ENCODE measurements at regions of chr22 and their contacts with region 1.

Region 1: GRCh38 chr22:38383417-38383816 is 66.2 kb upstream of the CSNK1E start:
- DNase-seq: no peak
- H3K4me3 ChIP-seq: no peak overlapping the region
- H3K27ac ChIP-seq: no peak overlapping the region
- H3K4me1 ChIP-seq: no peaks in the 10 kb centered on the region
- H3K27me3 ChIP-seq: no peaks in the 10 kb centered on the region
- CTCF ChIP-seq: no peak

Region 2: DNA sequence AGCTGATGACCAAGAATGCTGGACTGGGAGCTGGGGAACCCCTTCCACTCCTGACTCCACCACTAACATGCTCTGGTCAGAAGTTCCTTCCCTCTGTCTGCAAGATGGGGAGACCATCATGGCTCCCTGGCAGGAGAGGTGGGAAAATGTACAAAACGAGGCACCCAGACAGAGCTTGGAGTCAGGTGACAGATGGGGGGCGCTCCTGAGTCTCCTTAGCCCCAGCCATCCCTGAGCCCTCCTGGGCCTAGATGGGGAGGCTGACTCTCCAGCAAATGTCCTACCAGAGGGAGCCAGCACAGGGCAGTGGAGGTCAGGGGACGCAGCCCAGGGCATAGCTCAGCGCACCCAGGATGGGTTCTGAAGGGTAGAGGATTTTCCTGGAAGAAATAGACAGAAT is 51.6 kb after region 1 on chr22:
- CTCF ChIA-PET with region 1: no interaction called
- POLR2A ChIA-PET with region 1: no interaction called
- intact Hi-C with region 1: no loop called
- DNase-seq: no peak
- H3K4me3 ChIP-seq: no peak overlapping the region
- H3K27ac ChIP-seq: no peak overlapping the region
- H3K4me1 ChIP-seq: no peaks in the 10 kb centered on the region
- H3K27me3 ChIP-seq: 0 out of 2 replicates have a peak, but pooled peaks cover 3% of the 10 kb centered on the region
- CTCF ChIP-seq: no peak; the same call in 1 of the 2 replicates

Region 3: GRCh38 chr22:38569972-38570778 is 186.8 kb after region 1 on chr22 and contains the start of gene DMC1:
- CTCF ChIA-PET with region 1: no interaction called
- POLR2A ChIA-PET with region 1: no interaction called
- intact Hi-C with region 1: loop called (anchors 10 kb)
- DNase-seq: peak; percentile 77 to 91
- H3K4me3 ChIP-seq: peak within 1 kb of the TSS; percentile 64
- H3K27ac ChIP-seq: no peak within 1 kb of the TSS
- H3K4me1 ChIP-seq: peaks cover 10% of the 10 kb centered on the region
- H3K27me3 ChIP-seq: no peaks in the 10 kb centered on the region
- CTCF ChIP-seq: no peak
- total RNA-seq, gene DMC1: 5.6 and 6.3 TPM in 2 replicates